Activated CD4-positive, alpha-beta memory T cell treated with anti-CD3 and anti-CD28 coated beads for 36 hours (primary cell): ENCODE measurements at regions of chr13 and their contacts with region 1.

Region 1: GRCh38 chr13:99356158-99357091 is 49.2 kb upstream of the GPR183 start:
- DNase-seq: peak; percentile 62
- H3K4me3 Mint-ChIP-seq: peak overlapping the region; percentile 56
- H3K27ac Mint-ChIP-seq: peak overlapping the region; percentile 95
- H3K4me1 Mint-ChIP-seq: peaks cover 96% of the 10 kb centered on the region
- H3K27me3 Mint-ChIP-seq: no peaks in the 10 kb centered on the region

Region 2: GRCh38 chr13:98570929-98571372 is 785.5 kb before region 1 on chr13:
- CTCF ChIA-PET with region 1: no interaction called
- POLR2A ChIA-PET with region 1: no interaction called
- intact Hi-C with region 1: loop called (anchors 5 kb)
- DNase-seq: peak; percentile 67
- H3K4me3 Mint-ChIP-seq: peak overlapping the region; percentile 75
- H3K27ac Mint-ChIP-seq: peak overlapping the region; percentile 98
- H3K4me1 Mint-ChIP-seq: peaks cover 89% of the 10 kb centered on the region
- H3K27me3 Mint-ChIP-seq: no peaks in the 10 kb centered on the region

Region 3: GRCh38 chr13:99214232-99214631 is 142.2 kb before region 1 on chr13:
- CTCF ChIA-PET with region 1: no interaction called
- POLR2A ChIA-PET with region 1: interaction called, 3 read pairs
- intact Hi-C with region 1: loop called (anchors 1 kb)
- DNase-seq: peak; percentile 84
- H3K4me3 Mint-ChIP-seq: peak overlapping the region; percentile 78
- H3K27ac Mint-ChIP-seq: peak overlapping the region; percentile 78
- H3K4me1 Mint-ChIP-seq: peaks cover 78% of the 10 kb centered on the region
- H3K27me3 Mint-ChIP-seq: no peaks in the 10 kb centered on the region

Region 4: GRCh38 chr13:99314640-99315176 is 41.7 kb before region 1 on chr13:
- CTCF ChIA-PET with region 1: interaction called, 5 read pairs
- POLR2A ChIA-PET with region 1: interaction called, 246 read pairs
- intact Hi-C with region 1: loop called (anchors 2 kb)
- DNase-seq: peak; percentile 87
- H3K4me3 Mint-ChIP-seq: peak overlapping the region; percentile 64
- H3K27ac Mint-ChIP-seq: peak overlapping the region; percentile 93
- H3K4me1 Mint-ChIP-seq: peaks cover 82% of the 10 kb centered on the region
- H3K27me3 Mint-ChIP-seq: no peaks in the 10 kb centered on the region

Region 5: DNA sequence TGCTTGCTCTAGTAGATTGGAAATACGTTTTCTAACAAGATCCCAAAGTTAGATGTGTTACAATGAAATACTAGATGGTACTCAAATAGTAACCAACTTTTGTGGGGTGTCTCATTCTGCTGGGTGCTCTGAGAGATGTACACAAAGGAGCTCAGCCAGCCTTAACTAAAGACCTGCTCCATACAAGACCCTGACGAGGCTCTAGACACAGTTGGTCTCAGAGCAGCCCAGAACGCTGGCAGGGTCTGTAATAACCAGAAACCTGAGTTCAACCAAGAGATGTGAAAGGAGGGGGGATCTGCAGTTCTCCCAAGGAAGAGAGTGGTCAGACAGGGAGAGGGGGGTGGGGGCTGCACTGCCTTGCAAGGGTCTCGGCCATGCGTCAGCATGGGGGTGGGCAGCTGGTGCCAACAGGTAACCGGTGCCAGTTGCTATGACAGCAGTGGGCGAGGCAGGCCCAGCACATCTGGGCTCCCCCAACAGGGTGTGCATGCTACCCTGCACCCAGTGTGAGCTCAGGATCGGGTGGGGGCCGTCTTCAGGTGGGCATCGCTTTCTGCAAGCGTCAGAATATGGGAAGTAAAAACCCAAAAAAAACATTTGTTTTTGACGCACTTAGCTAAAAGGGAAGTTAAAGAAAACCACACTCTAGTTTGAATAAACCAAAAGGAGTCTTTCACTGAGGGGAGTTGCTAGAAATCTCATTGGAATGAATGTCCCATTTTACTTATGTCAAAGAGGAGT is 18.7 kb after region 1 on chr13:
- CTCF ChIA-PET with region 1: interaction called, 10 read pairs
- POLR2A ChIA-PET with region 1: interaction called, 4 read pairs
- intact Hi-C with region 1: loop called (anchors 1 kb)
- DNase-seq: peak; percentile 21
- H3K4me3 Mint-ChIP-seq: no peak overlapping the region
- H3K27ac Mint-ChIP-seq: no peak overlapping the region
- H3K4me1 Mint-ChIP-seq: peaks cover 76% of the 10 kb centered on the region
- H3K27me3 Mint-ChIP-seq: no peaks in the 10 kb centered on the region

Region 6: GRCh38 chr13:99501184-99501847 is 144.9 kb after region 1 on chr13 and contains the start of gene TM9SF2:
- CTCF ChIA-PET with region 1: no interaction called
- POLR2A ChIA-PET with region 1: no interaction called
- intact Hi-C with region 1: loop called (anchors 1 kb)
- DNase-seq: peak; percentile 98
- H3K4me3 Mint-ChIP-seq: peak within 1 kb of the TSS; percentile 88
- H3K27ac Mint-ChIP-seq: peak within 1 kb of the TSS; percentile 88
- H3K4me1 Mint-ChIP-seq: peaks cover 67% of the 10 kb centered on the region
- H3K27me3 Mint-ChIP-seq: no peaks in the 10 kb centered on the region
- total RNA-seq, gene TM9SF2: 67.2 to 72.0 TPM